HCT116 (cell line): ENCODE measurements at regions of chr3 and their contacts with region 1.

Region 1: GRCh38 chr3:61202086-61202485 is 49.2 kb downstream of the FHIT start:
- DNase-seq: no peak
- ATAC-seq: no peak
- H3K4me3 ChIP-seq: no peak overlapping the region
- H3K27ac ChIP-seq: no peak overlapping the region
- H3K4me1 ChIP-seq: no peaks in the 10 kb centered on the region
- H3K27me3 ChIP-seq: no peaks in the 10 kb centered on the region
- CTCF ChIP-seq: no peak
- POLR2A ChIP-seq: no peak
- RAD21 ChIP-seq: no peak

Region 2: GRCh38 chr3:61173676-61174075 is 28.4 kb before region 1 on chr3:
- CTCF ChIA-PET with region 1: no interaction called
- POLR2A ChIA-PET with region 1: no interaction called
- RAD21 ChIA-PET with region 1: no interaction called
- intact Hi-C with region 1: loop called (anchors 1 kb)
- DNase-seq: no peak
- ATAC-seq: no peak
- H3K4me3 ChIP-seq: no peak overlapping the region
- H3K27ac ChIP-seq: no peak overlapping the region
- H3K4me1 ChIP-seq: peaks cover 0 to 8% of the 10 kb centered on the region in 2 experiments; a peak in 2 of 4 replicates
- H3K27me3 ChIP-seq: no peaks in the 10 kb centered on the region
- CTCF ChIP-seq: no peak
- POLR2A ChIP-seq: no peak
- RAD21 ChIP-seq: no peak